A549 (cell line): ENCODE measurements at regions of chr20 and their contacts with region 1.

Region 1: GRCh38 chr20:38883081-38883980 is 42.9 kb upstream of the FAM83D start:
- DNase-seq: no peak
- ATAC-seq: peak; percentile 35 to 58; a peak in 3 of 6 replicates
- H3K4me3 ChIP-seq: no peak overlapping the region
- H3K27ac ChIP-seq: no peak overlapping the region
- H3K4me1 ChIP-seq: peaks cover 10% of the 10 kb centered on the region; the same call in 1 of the 3 replicates
- CTCF ChIP-seq: no peak
- EP300 ChIP-seq: no peak
- POLR2A ChIP-seq: no peak
- RAD21 ChIP-seq: no peak

Region 2: DNA sequence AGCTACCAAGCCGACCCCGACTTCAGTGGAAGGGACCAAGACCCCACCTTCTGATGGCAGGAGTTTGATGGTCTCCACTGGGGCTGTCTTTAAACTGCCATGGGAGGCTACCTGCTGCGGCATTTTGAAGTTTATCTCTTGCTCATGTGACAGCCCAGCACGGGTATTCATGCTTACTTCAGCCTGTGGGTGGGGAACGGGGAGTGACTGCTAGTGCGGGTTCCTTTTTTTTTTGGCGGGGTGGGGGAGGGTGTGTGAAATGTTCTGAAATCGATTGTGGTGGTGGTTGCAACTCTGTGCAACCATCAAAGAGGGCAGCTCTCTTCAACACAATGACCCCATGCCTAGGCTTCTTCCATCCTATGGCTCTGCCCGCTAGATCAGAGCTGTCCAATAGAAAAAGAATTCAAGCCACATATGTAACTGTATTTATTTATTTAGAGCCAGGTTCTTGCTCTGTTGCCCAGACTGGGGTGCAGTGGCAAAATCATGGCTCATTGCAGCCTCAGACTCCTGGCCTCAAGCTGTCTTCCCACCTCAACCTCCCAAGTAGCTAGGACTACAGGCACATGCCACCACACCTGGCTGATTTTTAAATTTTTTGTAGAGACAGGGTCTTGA is 24.2 kb before region 1 on chr20:
- CTCF ChIA-PET with region 1: interaction called, 14 read pairs
- POLR2A ChIA-PET with region 1: no interaction called
- DNase-seq: no peak
- ATAC-seq: no peak
- H3K4me3 ChIP-seq: no peak overlapping the region
- H3K27ac ChIP-seq: no peak overlapping the region
- H3K4me1 ChIP-seq: no peaks in the 10 kb centered on the region; the same call in 2 of the 3 replicates
- CTCF ChIP-seq: no peak
- EP300 ChIP-seq: no peak
- POLR2A ChIP-seq: no peak
- RAD21 ChIP-seq: no peak